HEK293T (cell line): ENCODE measurements at regions of chr6 and their contacts with region 1.

Region 1: DNA sequence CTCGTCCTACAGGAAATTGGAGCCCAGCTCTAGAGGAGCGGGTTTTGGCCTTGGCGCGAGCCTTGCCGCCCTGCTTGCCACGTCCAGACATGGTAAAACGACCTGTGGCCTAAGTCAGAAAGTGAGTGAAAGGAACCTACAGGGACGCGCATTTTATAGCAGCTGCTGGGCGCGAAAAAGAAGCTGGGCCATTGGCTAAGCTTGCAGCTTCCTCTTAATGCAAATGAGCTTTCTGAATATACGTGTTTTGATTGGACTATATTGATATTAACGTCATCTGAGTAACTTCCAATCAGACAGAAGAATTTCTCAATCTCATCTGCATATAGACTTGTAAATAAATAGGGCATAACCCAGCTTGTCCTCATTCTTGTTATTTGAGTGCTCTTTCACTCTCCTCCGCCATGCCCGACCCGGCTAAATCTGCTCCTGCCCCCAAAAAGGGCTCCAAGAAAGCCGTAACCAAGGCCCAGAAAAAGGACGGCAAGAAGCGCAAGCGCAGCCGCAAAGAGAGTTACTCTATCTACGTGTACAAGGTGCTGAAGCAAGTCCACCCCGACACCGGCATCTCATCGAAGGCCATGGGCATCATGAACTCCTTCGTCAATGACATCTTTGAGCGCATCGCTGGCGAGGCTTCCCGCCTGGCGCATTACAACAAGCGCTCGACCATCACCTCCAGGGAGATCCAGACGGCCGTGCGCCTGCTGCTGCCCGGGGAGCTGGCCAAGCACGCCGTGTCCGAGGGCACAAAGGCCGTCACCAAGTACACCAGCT is 18.9 kb downstream of the OR2B2 start:
- DNase-seq: peak; percentile 86

Region 2: GRCh38 chr6:26054857-26055669 is 1838.2 kb before region 1 on chr6:
- CTCF ChIA-PET with region 1: no interaction called
- POLR2A ChIA-PET with region 1: interaction called, 11 read pairs
- DNase-seq: peak; percentile 62

Region 3: DNA sequence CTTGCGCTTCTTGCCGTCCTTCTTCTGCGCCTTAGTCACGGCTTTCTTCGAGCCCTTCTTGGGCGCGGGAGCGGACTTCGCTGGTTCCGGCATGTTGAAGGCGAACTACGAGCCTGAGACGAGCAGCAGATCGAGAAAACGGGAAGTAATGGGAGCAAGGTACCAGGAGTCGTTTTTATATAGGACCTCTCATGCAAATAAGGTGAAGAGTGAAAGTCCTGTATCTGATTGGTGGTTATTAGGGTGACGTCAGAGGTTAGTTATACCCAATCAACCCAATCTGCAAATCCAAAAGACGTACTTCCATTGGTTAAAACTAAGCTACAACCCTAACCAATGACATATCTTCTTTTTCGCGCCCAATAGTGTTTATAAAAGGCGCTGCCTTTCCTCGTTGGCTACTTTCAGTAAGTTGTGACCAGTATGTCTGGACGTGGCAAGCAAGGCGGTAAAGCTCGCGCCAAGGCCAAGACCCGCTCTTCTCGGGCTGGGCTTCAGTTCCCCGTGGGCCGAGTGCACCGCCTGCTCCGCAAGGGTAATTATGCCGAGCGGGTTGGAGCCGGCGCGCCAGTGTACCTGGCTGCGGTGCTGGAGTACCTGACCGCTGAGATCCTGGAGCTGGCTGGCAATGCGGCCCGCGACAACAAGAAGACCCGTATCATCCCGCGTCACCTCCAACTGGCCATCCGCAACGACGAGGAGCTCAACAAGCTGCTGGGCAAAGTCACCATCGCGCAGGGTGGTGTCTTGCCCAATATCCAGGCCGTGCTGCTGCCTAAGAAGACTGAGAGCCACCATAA is 746.3 kb before region 1 on chr6:
- CTCF ChIA-PET with region 1: no interaction called
- POLR2A ChIA-PET with region 1: interaction called, 57 read pairs
- DNase-seq: peak; percentile 84

Region 4: GRCh38 chr6:27809939-27810767 is 83.1 kb before region 1 on chr6:
- CTCF ChIA-PET with region 1: interaction called, 4 read pairs
- POLR2A ChIA-PET with region 1: interaction called, 323 read pairs
- DNase-seq: peak; percentile 76

Region 5: GRCh38 chr6:27847706-27848105 is 45.5 kb before region 1 on chr6:
- CTCF ChIA-PET with region 1: interaction called, 3 read pairs
- POLR2A ChIA-PET with region 1: interaction called, 23 read pairs
- DNase-seq: no peak

Region 6: GRCh38 chr6:28104392-28105244 is 211.4 kb after region 1 on chr6:
- CTCF ChIA-PET with region 1: interaction called, 4 read pairs
- POLR2A ChIA-PET with region 1: interaction called, 14 read pairs
- DNase-seq: peak; percentile 84